Activated T-helper 2 cell treated with anti-CD3 and anti-CD28 coated beads, Interferon-gamma antibody, Interleukin-2, Interleukin-4, amounts not matched to agents 10 μg/mL and 5 μg/mL and 100 μg/mL, durations not matched to agents 14 hours and 24 hours and 36 hours (primary cell): ENCODE measurements at regions of chr3 and their contacts with region 1.

Region 1: DNA sequence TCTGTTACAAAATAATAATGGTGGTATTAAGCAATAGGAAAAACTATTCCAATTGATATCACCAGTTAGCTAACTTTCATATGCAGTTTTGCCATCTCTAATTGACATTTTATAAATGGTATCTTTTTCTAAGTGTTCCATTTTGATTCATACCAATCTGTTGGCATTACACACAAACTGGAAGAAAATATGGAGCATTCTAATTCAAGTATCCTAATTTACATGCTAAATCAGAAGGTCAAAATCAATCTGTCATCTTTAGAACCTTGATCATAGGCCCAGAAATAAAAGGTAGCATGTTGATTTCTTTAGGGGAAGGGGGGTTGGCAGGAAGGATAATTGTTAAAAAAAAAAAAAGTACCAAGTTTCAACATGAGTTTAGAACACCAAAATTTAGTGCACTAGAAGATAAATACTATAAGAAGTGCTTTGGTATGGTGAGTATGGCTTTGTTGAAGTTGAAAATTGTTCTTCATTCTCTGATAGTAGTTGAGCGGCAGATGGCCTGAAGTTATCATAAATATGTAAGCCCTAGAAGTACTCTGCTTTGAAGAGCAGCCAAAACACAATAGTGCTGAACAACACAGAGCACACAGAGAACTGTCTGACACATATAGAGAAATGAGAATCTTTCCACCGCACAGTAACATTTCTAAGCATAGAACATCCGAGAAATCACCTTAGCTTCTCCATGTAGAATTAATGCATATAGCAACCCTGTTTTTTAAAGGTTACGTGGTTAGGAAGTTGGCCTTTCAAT is 130.1 kb downstream of the TAFA4 start:
- DNase-seq: no peak
- H3K4me3 Mint-ChIP-seq: no peak overlapping the region
- H3K27ac Mint-ChIP-seq: no peak overlapping the region
- H3K4me1 Mint-ChIP-seq: no peaks in the 10 kb centered on the region
- H3K27me3 Mint-ChIP-seq: no peaks in the 10 kb centered on the region

Region 2: DNA sequence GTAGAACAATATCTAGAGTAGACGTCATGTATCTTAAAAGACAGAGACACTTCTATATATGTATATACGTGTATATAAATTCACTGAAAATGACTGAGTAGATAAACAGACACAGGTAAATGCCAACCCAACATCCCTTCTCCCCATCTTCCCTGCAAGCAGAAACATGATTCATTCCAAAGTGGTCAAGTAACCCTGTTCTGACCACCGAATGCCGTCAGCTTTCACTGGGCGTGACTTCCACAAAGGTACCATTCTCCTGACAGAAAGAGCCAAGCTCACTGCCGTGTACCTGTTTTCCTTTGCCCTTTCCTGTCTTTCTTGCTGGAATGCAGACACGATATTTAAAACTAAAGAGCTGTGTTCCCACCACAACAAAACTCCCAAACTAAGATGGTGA is 53.3 kb after region 1 on chr3:
- intact Hi-C with region 1: loop called (anchors 2 kb)
- DNase-seq: no peak
- H3K4me3 Mint-ChIP-seq: no peak overlapping the region
- H3K27ac Mint-ChIP-seq: no peak overlapping the region
- H3K4me1 Mint-ChIP-seq: no peaks in the 10 kb centered on the region
- H3K27me3 Mint-ChIP-seq: no peaks in the 10 kb centered on the region